PC-3 (cell line): ENCODE measurements at regions of chr11 and their contacts with region 1.

Region 1: DNA sequence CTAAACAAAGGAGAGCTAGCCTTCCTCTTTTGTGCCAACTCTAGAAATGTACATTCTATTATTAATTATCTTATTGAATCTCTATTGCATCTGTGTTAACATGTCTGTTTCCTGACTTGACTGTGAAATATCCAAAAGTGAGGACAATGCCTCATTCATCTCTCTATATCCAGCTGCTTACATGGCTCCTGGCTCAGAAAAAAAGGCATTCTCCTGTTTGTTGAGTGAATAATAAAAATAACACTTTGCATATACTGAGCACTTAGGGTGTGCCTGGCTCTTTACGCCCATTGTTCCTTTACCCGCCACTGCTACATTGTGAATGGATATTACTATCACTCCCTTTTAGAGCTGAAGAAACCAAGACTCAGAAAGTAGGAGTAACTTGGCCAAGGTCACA is 19.9 kb downstream of the NRXN2 start:
- DNase-seq: no peak
- ATAC-seq: no peak
- H3K4me3 ChIP-seq: no peak overlapping the region
- H3K27ac ChIP-seq: no peak overlapping the region
- H3K4me1 ChIP-seq: no peaks in the 10 kb centered on the region
- H3K27me3 ChIP-seq: peaks cover 37% of the 10 kb centered on the region
- CTCF ChIP-seq: no peak

Region 2: GRCh38 chr11:64387916-64388315 is 315.1 kb before region 1 on chr11:
- CTCF ChIA-PET with region 1: interaction called, 5 read pairs
- POLR2A ChIA-PET with region 1: interaction called, 12 read pairs
- intact Hi-C with region 1: no loop called
- DNase-seq: no peak
- ATAC-seq: no peak
- H3K4me3 ChIP-seq: no peak overlapping the region
- H3K27ac ChIP-seq: no peak overlapping the region
- H3K4me1 ChIP-seq: peaks cover 12% of the 10 kb centered on the region
- H3K27me3 ChIP-seq: no peaks in the 10 kb centered on the region
- CTCF ChIP-seq: no peak

Region 3: DNA sequence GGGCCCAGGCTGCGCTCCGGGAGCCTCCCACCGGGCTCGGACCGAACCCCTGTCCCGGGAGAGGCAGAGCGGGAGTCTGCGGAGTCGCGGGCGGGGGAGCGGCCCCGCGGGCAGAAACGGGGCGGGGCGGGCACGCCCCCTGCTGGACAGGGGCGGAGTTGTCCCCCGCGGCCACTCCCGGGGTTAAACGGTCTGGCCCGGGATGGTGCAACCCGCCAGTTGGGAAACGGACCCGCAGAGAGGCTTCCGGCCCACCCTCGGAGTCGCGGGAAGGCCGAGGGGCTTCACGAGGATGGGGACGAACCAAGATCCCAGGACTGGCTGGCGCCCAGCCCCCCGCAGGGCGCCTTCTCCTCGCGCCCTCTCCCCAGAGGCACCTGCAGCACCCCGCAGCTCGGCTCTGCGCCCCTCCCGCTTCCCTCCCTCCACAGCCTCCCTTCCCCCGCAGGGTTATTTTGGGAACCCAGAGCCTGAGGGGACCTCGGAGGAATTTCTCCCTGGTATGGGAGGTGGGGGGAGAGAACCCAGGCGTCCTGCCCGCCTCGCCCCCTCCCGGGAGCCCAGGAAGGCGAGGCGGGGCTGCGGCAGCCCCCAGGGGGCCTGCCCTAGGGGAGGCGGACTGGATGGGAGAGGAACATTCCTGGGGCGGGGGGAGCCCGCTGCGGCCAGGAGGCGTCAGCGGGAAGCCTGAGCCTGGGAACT is 40.0 kb after region 1 on chr11:
- CTCF ChIA-PET with region 1: no interaction called
- POLR2A ChIA-PET with region 1: no interaction called
- intact Hi-C with region 1: no loop called
- DNase-seq: peak; percentile 73
- ATAC-seq: peak; percentile 70
- H3K4me3 ChIP-seq: peak overlapping the region; percentile 70
- H3K27ac ChIP-seq: no peak overlapping the region
- H3K4me1 ChIP-seq: peaks cover 13% of the 10 kb centered on the region
- H3K27me3 ChIP-seq: peaks cover 36% of the 10 kb centered on the region
- CTCF ChIP-seq: peak; percentile 87